Activated T-helper 1 cell treated with anti-CD3 and anti-CD28 coated beads, Interleukin-12 subunit alpha, Interleukin-12 subunit beta, Interleukin-2, Interleukin-4 antibody, amounts not matched to agents 30 ng/mL and 10 ng/mL and 1 ng/mL, durations not matched to agents 14 hours and 24 hours and 36 hours (primary cell): ENCODE measurements at regions of chr2 and their contacts with region 1.

Region 1: DNA sequence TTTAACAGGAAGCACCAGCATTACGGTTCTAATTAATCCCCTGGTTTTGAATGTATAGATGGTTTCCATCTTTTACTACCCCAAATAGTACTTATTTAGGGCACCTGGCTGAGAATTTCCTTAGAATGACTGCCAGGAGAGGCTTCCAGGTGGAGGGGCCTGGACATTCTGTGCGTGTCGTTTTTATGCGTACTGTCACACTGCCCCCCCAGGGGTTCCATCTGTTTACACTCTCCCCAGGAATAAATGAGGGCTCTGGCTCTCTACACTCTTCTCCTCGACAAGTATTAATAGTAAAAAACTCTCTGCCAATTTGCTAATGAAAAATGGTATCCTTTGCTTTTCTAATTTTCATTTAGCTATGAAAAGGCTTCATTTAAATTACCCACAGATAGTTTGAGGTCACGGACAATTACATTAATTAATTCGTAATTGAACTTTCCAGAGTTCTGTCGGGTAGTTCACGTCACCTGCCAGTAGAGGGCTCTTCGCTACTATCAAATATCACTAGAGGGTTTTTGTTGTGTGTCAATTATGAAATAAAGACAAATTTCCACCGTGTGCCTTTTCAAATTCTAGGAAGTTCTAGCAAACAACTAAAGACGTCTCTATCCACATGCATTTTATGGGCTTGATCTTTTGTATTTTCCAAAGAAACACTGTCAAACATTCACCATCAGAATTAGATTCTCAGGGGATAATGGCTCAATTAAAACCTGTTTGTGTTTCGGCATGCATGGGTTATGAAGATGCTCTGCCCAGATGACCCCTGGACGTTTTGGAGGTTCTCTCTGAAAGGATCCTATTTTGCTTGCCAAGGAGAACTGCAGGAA is 88.8 kb upstream of the ASB18 start:
- DNase-seq: no peak
- H3K4me3 Mint-ChIP-seq: no peak overlapping the region
- H3K27ac Mint-ChIP-seq: no peak overlapping the region
- H3K4me1 Mint-ChIP-seq: no peaks in the 10 kb centered on the region
- H3K27me3 Mint-ChIP-seq: peaks cover 1% of the 10 kb centered on the region

Region 2: GRCh38 chr2:237060534-237061312 is 707.7 kb after region 1 on chr2:
- intact Hi-C with region 1: loop called (anchors 1 kb)
- DNase-seq: no peak
- H3K4me3 Mint-ChIP-seq: no peak overlapping the region
- H3K27ac Mint-ChIP-seq: no peak overlapping the region
- H3K4me1 Mint-ChIP-seq: peaks cover 32% of the 10 kb centered on the region
- H3K27me3 Mint-ChIP-seq: no peaks in the 10 kb centered on the region

Region 3: DNA sequence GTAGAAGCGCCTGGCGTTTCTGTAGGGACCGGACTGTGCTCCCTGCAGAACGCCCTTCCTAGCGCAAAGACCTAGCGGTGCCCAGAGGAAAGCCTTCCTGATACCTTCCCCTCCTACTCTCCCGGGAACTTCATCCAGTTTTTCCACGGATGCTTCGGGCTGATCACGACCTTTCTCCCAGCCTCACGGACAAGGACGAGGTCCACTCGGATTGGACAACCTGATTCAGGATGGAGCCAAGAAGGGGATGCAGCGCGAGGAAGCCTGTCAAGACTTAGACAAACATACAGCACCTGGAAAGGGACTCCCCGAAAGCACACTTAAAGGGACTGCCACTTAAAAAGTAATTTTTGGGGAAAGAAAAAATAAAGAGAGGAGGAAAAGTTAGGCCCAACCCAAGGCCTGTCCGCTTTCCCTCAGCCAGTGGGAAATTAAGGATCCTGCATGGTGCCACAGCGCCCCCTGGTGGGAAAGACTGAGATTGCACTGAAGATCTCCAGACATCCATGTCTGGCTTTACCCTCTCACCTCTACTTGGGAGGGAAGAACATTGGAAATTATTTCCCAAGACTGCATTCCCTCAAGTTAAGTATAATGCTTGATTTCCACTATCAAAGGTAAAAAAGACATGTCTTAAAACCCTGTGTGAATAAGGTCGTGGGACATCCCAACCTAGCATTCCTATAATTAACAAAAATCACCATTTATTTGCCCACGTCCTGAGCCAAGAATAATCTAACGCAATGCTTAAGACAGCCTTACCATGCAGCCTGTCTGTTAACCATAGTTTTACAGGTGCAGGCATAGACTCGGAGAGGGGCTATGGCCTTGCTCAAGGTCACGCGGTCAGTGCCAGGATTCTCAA is 719.3 kb after region 1 on chr2:
- intact Hi-C with region 1: loop called (anchors 1 kb)
- DNase-seq: peak; percentile 35
- H3K4me3 Mint-ChIP-seq: no peak overlapping the region
- H3K27ac Mint-ChIP-seq: no peak overlapping the region
- H3K4me1 Mint-ChIP-seq: no peaks in the 10 kb centered on the region
- H3K27me3 Mint-ChIP-seq: peaks cover 2% of the 10 kb centered on the region